Aorta (tissue), 5 donors: ENCODE measurements at regions of chr3 and their contacts with region 1.

Region 1: DNA sequence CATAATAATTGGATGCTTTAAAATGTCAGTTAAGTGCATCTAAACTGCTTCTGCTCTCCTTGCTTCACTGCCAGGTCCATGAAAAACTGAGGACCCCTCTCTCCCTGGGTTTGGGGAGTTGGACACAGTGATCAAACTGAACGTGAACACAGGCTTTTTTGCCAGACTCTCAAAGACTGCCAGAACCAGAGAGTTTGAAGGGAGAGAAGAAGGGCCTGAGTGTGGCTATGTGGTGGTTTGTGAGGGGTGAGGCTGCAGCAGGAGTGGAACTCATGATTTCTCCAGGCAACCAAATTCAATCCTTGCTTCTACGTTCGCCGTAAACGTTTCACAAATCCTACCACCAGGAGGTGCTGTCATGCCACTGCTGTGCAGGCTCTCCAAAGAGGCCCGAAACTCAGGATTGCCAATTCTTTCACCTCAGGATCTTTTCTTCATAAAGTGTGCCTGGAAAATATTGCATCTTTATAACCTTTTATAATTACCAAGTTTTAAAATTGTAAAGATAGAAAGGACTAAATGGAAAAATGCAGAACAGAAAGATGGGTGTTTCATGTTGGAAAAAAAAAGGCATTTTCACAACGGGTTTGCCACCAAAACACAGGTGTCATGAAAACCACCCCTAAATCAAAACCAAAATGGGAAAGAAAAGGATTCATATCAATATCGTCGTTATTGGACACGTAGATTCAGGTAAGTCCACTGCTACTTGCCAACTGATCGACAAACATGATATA is 19.7 kb downstream of the TM4SF4 start:
- DNase-seq: peak; percentile 74 to 83
- ATAC-seq: peak; percentile 77
- H3K4me3 ChIP-seq: no peak overlapping the region
- H3K27ac ChIP-seq: no peak overlapping the region
- H3K4me1 ChIP-seq: no peaks in the 10 kb centered on the region
- H3K27me3 ChIP-seq: no peaks in the 10 kb centered on the region

Region 2: GRCh38 chr3:149771652-149772271 is 277.6 kb after region 1 on chr3:
- intact Hi-C with region 1: loop called in 1 of 2 experiments (anchors 5 kb)
- DNase-seq: peak in 1 of 2 donors; percentile 56
- ATAC-seq: no peak
- H3K4me3 ChIP-seq: no peak overlapping the region
- H3K27ac ChIP-seq: no peak overlapping the region
- H3K4me1 ChIP-seq: no peaks in the 10 kb centered on the region
- H3K27me3 ChIP-seq: no peaks in the 10 kb centered on the region